A673 (cell line): ENCODE measurements at regions of chr11 and their contacts with region 1.

Region 1: GRCh38 chr11:71080239-71081097 is 171.9 kb downstream of the SHANK2 start:
- DNase-seq: peak; percentile 92
- H3K4me3 ChIP-seq: no peak overlapping the region
- H3K27ac ChIP-seq: no peak overlapping the region
- H3K4me1 ChIP-seq: no peaks in the 10 kb centered on the region
- H3K27me3 ChIP-seq: no peaks in the 10 kb centered on the region
- CTCF ChIP-seq: peak; percentile 98

Region 2: DNA sequence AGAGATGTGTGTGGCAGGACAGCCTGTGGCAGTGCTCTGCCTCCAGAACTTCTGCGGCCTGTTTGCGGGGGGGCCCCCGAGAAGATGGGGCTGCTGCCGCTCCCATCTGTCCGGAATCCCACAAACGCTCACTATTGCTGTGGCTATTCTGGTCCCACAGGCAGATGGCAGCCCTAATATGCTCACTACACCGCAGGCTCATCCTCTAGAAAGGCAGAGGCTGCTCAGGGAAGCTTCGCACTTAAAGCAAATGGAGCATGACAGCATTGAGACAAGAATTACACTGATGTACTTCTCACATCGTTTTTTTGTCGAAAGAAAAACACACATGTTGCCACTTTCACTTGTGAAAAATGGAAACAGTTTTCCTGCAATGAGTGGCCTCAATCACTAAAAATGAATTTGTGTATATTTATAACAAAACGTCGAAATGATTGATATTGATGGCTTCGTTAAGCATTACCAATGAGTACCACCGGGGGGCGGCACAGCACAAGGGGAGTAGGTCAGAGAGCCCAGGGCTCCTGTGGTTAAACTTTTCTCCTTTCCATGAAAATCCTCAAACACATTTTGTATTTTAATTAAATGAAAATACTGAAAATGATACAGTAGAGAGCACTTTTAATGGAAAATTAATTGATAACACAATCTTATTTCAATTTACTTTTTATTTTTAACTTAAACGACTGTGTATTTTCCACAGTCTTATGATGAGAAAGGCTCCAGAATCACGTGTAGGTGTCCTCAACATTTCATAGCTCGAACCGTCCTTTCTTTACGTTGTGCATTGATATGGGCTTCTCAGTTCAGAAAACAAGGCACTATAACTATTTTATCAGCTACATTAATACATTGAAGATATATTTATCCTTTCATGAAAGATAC is 613.0 kb before region 1 on chr11:
- CTCF ChIA-PET with region 1: no interaction called
- POLR2A ChIA-PET with region 1: no interaction called
- intact Hi-C with region 1: loop called (anchors 1 kb)
- DNase-seq: peak; percentile 74
- H3K4me3 ChIP-seq: no peak overlapping the region
- H3K27ac ChIP-seq: no peak overlapping the region
- H3K4me1 ChIP-seq: no peaks in the 10 kb centered on the region
- H3K27me3 ChIP-seq: no peaks in the 10 kb centered on the region
- CTCF ChIP-seq: peak; percentile 99

Region 3: DNA sequence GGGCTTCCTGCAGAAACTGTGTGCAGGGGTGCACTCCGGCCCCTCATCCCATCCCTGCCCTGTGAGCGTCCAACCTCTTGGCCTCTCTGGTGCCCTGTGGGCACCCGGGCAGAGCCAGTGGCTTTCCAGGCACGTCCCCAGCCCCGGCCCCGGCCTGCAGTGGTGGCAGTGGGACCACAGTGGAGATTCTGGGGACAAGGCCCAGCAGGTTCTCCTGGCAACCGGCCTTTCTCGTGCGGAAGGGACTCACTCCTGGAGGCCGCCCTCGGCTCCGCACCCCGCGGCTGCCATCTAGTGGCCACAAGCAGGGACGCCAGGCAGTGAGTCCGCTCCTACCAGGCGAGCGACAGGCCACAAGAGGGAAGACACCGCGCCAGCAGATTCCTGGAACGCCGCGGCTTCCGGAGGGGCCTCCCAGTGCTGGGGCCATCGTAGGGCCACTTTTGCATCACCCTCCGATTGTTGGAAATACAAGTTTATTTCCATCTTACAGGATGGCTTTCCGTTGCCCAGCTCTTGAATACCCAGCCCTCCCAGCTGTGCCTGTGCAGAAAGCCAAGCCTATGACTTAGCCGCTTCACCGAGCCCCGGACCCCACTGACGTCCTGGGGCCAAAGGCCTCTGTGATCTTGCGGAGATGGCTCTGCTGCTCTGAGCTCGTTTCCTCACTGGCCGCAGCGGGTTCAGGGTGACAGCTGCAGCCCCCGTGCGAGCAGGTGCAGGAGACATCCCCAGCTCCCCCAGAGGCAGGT is 324.9 kb before region 1 on chr11:
- CTCF ChIA-PET with region 1: no interaction called
- POLR2A ChIA-PET with region 1: no interaction called
- intact Hi-C with region 1: no loop called
- DNase-seq: peak; percentile 85
- H3K4me3 ChIP-seq: no peak overlapping the region
- H3K27ac ChIP-seq: no peak overlapping the region
- H3K4me1 ChIP-seq: no peaks in the 10 kb centered on the region
- H3K27me3 ChIP-seq: peaks cover 14% of the 10 kb centered on the region
- CTCF ChIP-seq: peak; percentile 98

Region 4: DNA sequence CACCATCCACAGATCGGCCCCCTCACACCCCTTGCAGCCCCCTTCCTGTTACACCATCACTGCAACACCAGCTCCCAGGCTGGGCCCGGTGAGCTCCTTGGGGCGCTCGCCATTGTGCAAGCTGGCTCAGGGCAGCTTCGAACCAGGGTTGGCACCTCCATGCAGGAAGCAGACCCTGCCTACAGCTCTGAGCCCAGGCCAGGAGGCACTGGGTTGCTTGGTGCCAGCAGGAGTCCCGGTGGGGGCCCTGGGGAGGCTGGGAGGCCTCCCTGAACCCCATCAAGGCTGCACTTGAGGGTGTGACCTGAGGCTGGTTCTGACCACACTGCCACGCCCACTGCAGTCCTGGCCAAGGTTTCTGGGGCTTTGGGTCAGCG is 265.0 kb before region 1 on chr11:
- CTCF ChIA-PET with region 1: no interaction called
- POLR2A ChIA-PET with region 1: no interaction called
- intact Hi-C with region 1: loop called (anchors 1 kb)
- DNase-seq: no peak
- H3K4me3 ChIP-seq: no peak overlapping the region
- H3K27ac ChIP-seq: no peak overlapping the region
- H3K4me1 ChIP-seq: no peaks in the 10 kb centered on the region
- H3K27me3 ChIP-seq: no peaks in the 10 kb centered on the region
- CTCF ChIP-seq: no peak